ENCODE measurements at regions of chr11 and their contacts with region 1.

Region 1: DNA sequence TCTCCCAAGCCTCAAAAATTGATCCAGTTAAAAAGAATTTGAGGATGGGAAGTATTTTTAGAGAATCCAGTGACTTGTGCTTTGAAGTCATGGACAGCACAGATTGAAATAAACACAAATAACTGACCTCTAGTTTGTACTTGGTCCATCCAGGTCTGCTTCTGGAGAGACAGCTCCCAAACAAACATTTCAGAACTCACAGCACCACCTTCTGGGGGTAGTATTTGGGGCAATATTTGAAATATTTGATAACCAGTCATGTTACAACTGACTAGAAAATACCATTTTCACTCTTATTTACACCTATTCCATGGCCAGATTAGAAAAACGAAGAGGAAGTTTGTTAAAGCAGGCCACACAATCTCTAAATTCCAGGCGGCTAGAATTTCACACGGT is 56.2 kb downstream of the CTSC start:
- DNase-seq: no peak
- ATAC-seq: no peak
- H3K4me3 ChIP-seq: no peak overlapping the region
- H3K27ac ChIP-seq: no peak overlapping the region
- H3K4me1 ChIP-seq: peaks cover 0 to 48% (median 19%) of the 10 kb centered on the region in 9 donors
- H3K27me3 ChIP-seq: no peaks in the 10 kb centered on the region
- CTCF ChIP-seq: peak in 2 of 9 donors; percentile 7 to 26

Region 2: GRCh38 chr11:88179971-88180629 is 101.2 kb before region 1 on chr11:
- intact Hi-C with region 1: loop called in 1 of 10 experiments (anchors 10 kb)
- DNase-seq: no peak
- ATAC-seq: no peak
- H3K4me3 ChIP-seq: no peak overlapping the region
- H3K27ac ChIP-seq: no peak overlapping the region
- H3K4me1 ChIP-seq: peaks cover 0 to 8% (median 3%) of the 10 kb centered on the region in 9 donors
- H3K27me3 ChIP-seq: peaks cover 0 to 5% (median 0%) of the 10 kb centered on the region in 7 donors
- CTCF ChIP-seq: no peak

Measured in heart right ventricle (tissue), 16 donors.